HEK293 (cell line): ENCODE measurements at regions of chr1 and their contacts with region 1.

Region 1: GRCh38 chr1:112390775-112391602 is 5.0 kb upstream of the CTTNBP2NL start:
- H3K4me3 ChIP-seq: peak overlapping the region; percentile 42
- H3K27ac ChIP-seq: no peak overlapping the region
- H3K4me1 ChIP-seq: peaks cover 10% of the 10 kb centered on the region
- CTCF ChIP-seq: peak; percentile 91

Region 2: GRCh38 chr1:112406771-112407170 is 15.8 kb after region 1 on chr1:
- CTCF ChIA-PET with region 1: interaction called, 12 read pairs
- POLR2A ChIA-PET with region 1: interaction called, 4 read pairs
- H3K4me3 ChIP-seq: no peak overlapping the region
- H3K27ac ChIP-seq: no peak overlapping the region
- H3K4me1 ChIP-seq: peaks cover 8% of the 10 kb centered on the region
- CTCF ChIP-seq: no peak

Region 3: GRCh38 chr1:112614460-112615065 is 223.6 kb after region 1 on chr1:
- CTCF ChIA-PET with region 1: interaction called, 60 read pairs
- POLR2A ChIA-PET with region 1: interaction called, 10 read pairs
- H3K4me3 ChIP-seq: no peak overlapping the region
- H3K27ac ChIP-seq: no peak overlapping the region
- H3K4me1 ChIP-seq: no peaks in the 10 kb centered on the region
- CTCF ChIP-seq: peak; percentile 48

Region 4: GRCh38 chr1:112674439-112674985 is 283.5 kb after region 1 on chr1 and contains the start of gene MOV10:
- CTCF ChIA-PET with region 1: no interaction called
- POLR2A ChIA-PET with region 1: interaction called, 12 read pairs
- H3K4me3 ChIP-seq: peak within 1 kb of the TSS; percentile 80
- H3K27ac ChIP-seq: peak within 1 kb of the TSS; percentile 85
- H3K4me1 ChIP-seq: peaks cover 5% of the 10 kb centered on the region; the same call in 1 of the 2 replicates
- CTCF ChIP-seq: no peak